ENCODE measurements at regions of chr12 and their contacts with region 1.

Region 1: GRCh38 chr12:90253674-90254181 is 545.1 kb upstream of the ATP2B1 start:
- DNase-seq: peak; percentile 35 to 74 (median 59)
- ATAC-seq: peak; percentile 82 to 94 (median 90)
- H3K4me3 ChIP-seq: no peak overlapping the region
- H3K27ac ChIP-seq: peak overlapping the region in 2 of 12 donors; percentile 19 to 28
- H3K4me1 ChIP-seq: peaks cover 0 to 29% (median 9%) of the 10 kb centered on the region in 12 donors
- H3K27me3 ChIP-seq: no peaks in the 10 kb centered on the region
- CTCF ChIP-seq: peak in 4 of 12 donors; percentile 6 to 15 (median 12)
- POLR2A ChIP-seq: no peak

Region 2: DNA sequence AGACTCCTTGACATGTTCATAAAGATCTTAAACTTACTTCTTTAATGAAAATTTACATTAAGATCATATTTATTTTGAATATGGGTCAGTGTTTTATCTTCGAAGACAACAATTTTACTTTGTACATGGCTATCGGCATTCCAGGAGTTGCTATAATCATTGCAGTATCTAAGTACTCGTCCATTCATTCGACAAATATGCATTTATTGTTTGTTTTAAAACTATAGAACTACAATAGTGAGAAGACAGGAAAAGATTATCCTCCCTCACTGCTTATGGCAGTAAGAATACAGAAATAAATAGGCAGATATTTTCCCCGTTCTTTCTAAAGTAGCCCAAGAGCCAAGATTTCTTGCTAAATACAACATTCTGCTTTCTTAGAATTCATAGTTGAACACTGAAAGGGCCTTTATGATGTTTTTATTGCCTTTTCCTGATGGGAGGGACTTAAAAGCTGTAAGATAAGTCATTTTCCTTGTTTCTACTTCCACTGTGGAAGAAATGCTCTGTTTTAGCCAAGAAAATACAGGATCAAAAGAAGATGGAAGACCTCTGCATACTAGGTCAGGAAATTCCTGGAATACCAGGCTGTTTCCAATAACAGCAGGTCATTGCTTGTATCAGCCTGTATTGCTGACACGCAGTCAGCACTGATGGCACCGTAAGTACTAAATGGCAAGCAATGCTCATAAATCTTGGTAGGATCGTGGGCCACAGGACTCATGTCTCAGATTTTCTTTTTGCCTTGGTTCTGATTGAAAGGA is 24.1 kb before region 1 on chr12:
- intact Hi-C with region 1: loop called in 1 of 10 experiments (anchors 1 kb)
- DNase-seq: no peak
- ATAC-seq: no peak
- H3K4me3 ChIP-seq: no peak overlapping the region
- H3K27ac ChIP-seq: no peak overlapping the region
- H3K4me1 ChIP-seq: no peaks in the 10 kb centered on the region
- H3K27me3 ChIP-seq: no peaks in the 10 kb centered on the region
- CTCF ChIP-seq: no peak
- POLR2A ChIP-seq: no peak

Region 3: DNA sequence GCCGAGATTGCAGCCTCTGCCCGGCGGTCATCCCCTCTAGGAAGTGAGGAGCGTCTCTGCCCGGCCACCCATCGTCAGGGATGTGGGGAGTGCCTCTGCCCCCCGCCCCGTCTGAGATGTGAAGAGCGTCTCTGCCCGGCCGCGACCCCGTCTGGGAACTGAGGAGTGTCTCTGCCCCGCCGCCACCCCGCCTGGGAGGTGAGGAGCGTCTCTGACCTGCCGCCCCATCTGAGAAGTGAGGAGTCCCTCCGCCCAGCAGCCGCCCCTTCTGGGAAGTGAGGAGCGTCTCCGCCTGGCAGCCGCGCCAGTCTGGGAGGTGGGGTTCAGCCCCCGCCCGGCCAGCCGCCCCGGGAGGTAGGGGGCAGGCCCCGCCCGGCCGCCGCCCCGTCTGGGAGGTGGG is 157.2 kb after region 1 on chr12:
- intact Hi-C with region 1: no loop called
- DNase-seq: peak in 2 of 5 donors; percentile 10 to 51
- ATAC-seq: no peak
- H3K4me3 ChIP-seq: no peak overlapping the region
- H3K27ac ChIP-seq: no peak overlapping the region
- H3K4me1 ChIP-seq: no peaks in the 10 kb centered on the region
- H3K27me3 ChIP-seq: no peaks in the 10 kb centered on the region
- CTCF ChIP-seq: no peak
- POLR2A ChIP-seq: no peak